Ovary (tissue), 10 donors: ENCODE measurements at regions of chr3 and their contacts with region 1.

Region 1: GRCh38 chr3:46948830-46949671 is 27.5 kb downstream of the CCDC12 start:
- DNase-seq: no peak
- H3K4me3 ChIP-seq: no peak overlapping the region
- H3K27ac ChIP-seq: no peak overlapping the region
- H3K4me1 ChIP-seq: peaks cover 39% of the 10 kb centered on the region
- H3K27me3 ChIP-seq: no peaks in the 10 kb centered on the region
- CTCF ChIP-seq: no peak
- EP300 ChIP-seq: no peak
- POLR2A ChIP-seq: no peak

Region 2: GRCh38 chr3:46926871-46927717 is 22.0 kb before region 1 on chr3:
- intact Hi-C with region 1: no loop called
- DNase-seq: peak in 1 of 5 donors; percentile 27
- H3K4me3 ChIP-seq: no peak overlapping the region
- H3K27ac ChIP-seq: peak overlapping the region in 1 of 2 donors; percentile 45
- H3K4me1 ChIP-seq: peaks cover 21% of the 10 kb centered on the region
- H3K27me3 ChIP-seq: no peaks in the 10 kb centered on the region
- CTCF ChIP-seq: no peak
- EP300 ChIP-seq: no peak
- POLR2A ChIP-seq: no peak

Region 3: DNA sequence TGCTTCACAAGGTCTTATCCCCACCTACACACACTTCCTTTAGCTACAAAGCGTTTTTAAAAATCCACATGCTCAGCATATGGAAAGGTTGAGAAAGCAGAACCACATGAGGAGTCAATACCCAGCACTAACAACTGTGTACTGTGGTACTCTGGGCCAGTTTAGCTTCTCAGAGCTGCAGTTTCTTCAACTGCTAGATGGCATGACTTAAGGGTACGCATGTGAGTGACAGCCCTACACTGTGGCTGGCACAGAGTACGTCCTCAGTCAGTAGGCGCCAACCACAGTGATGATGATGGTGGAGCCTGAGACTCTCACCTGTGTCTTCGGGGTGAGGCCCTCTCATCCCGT is 10.1 kb after region 1 on chr3:
- intact Hi-C with region 1: loop called in 1 of 4 experiments (anchors 1 kb)
- DNase-seq: no peak
- H3K4me3 ChIP-seq: no peak overlapping the region
- H3K27ac ChIP-seq: peak overlapping the region; percentile 5 to 6
- H3K4me1 ChIP-seq: peaks cover 39% of the 10 kb centered on the region
- H3K27me3 ChIP-seq: no peaks in the 10 kb centered on the region
- CTCF ChIP-seq: no peak
- EP300 ChIP-seq: no peak
- POLR2A ChIP-seq: no peak